Dorsolateral prefrontal cortex (tissue), 120 donors: ENCODE measurements at regions of chr3 and their contacts with region 1.

Region 1: DNA sequence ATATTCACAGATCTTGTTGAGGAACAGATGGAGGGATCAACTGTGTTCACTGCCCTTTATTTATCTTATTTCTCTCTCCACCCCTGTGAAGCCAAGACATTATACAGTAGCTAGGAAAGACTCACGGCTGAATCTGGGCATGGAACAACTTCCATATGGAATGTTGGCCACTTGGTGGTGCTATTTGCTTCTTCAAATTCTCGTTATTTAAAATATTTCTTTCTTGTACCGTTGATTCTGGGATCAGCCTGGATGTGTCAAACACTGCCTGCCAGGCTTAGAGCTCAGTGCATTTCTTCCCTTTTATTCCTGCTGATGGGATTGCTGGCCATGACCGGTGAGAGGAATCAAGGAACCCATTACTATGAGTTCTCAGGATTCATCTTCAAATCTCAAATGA is 17.5 kb upstream of the GASK1A start:
- DNase-seq: peak in 4 of 10 donors; percentile 28 to 65 (median 42)
- H3K4me3 ChIP-seq: no peak overlapping the region
- H3K27ac ChIP-seq: peak overlapping the region in 4 of 59 donors; percentile 20 to 49 (median 22)
- H3K27me3 ChIP-seq: no peaks in the 10 kb centered on the region
- CTCF ChIP-seq: peak; percentile 55 to 91 (median 78)

Region 2: GRCh38 chr3:43071313-43071893 is 109.8 kb after region 1 on chr3:
- intact Hi-C with region 1: loop called in 1 of 2 experiments (anchors 10 kb)
- DNase-seq: no peak
- H3K4me3 ChIP-seq: no peak overlapping the region
- H3K27ac ChIP-seq: no peak overlapping the region
- H3K27me3 ChIP-seq: no peaks in the 10 kb centered on the region
- CTCF ChIP-seq: peak in 42 of 56 donors; percentile 9 to 47 (median 30)

Region 3: DNA sequence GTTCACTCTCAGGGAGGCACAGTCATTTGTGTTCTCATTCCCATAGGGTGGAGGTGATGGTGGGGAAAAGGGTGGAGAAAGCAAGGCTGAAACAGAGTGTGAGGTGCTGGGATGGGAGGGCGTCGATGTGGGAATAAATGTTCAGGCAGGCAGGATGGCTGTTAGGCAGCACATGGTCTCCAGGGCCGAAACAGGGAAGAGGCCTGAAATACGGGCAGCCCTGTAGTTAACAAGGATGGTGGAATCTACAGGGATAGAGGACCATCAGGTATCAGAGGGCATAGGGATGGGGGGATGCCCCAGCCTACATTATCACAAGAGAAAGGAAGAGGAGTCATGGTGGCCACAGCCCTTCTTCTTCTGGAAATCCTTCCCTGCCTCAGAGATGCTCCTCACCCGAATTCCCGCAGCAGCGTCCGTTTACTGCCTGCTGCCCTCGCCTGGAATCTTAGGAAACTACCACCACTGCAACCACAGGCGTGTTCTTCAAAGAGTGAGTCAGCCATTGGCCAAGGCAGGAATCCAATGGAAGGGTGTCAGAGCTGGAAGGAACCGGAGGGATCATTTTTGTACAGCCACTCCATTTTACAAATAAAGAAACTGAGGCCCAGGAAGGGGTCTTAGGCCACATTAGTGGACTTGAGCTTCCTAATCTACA is 194.0 kb after region 1 on chr3:
- intact Hi-C with region 1: loop called (anchors 2 to 5 kb)
- DNase-seq: peak in 8 of 10 donors; percentile 59 to 80 (median 70)
- H3K4me3 ChIP-seq: no peak overlapping the region
- H3K27ac ChIP-seq: peak overlapping the region in 11 of 59 donors; percentile 8 to 97 (median 28)
- H3K27me3 ChIP-seq: peaks cover 0 to 3% (median 0%) of the 10 kb centered on the region in 45 donors
- CTCF ChIP-seq: peak in 54 of 56 donors; percentile 33 to 69 (median 55)

Region 4: GRCh38 chr3:43503067-43503728 is 541.6 kb after region 1 on chr3:
- intact Hi-C with region 1: loop called (anchors 5 kb)
- DNase-seq: no peak
- H3K4me3 ChIP-seq: no peak overlapping the region
- H3K27ac ChIP-seq: no peak overlapping the region
- H3K27me3 ChIP-seq: no peaks in the 10 kb centered on the region
- CTCF ChIP-seq: peak; percentile 44 to 79 (median 62)